ENCODE measurements at regions of chr13 and their contacts with region 1.

Region 1: GRCh38 chr13:26062844-26063444 is 11.1 kb upstream of the SHISA2 start:
- DNase-seq: peak; percentile 39 to 72 (median 61)
- H3K4me3 ChIP-seq: no peak overlapping the region
- H3K27ac ChIP-seq: no peak overlapping the region
- H3K4me1 ChIP-seq: no peaks in the 10 kb centered on the region
- H3K27me3 ChIP-seq: peaks cover 0 to 14% (median 3%) of the 10 kb centered on the region in 5 experiments

Region 2: DNA sequence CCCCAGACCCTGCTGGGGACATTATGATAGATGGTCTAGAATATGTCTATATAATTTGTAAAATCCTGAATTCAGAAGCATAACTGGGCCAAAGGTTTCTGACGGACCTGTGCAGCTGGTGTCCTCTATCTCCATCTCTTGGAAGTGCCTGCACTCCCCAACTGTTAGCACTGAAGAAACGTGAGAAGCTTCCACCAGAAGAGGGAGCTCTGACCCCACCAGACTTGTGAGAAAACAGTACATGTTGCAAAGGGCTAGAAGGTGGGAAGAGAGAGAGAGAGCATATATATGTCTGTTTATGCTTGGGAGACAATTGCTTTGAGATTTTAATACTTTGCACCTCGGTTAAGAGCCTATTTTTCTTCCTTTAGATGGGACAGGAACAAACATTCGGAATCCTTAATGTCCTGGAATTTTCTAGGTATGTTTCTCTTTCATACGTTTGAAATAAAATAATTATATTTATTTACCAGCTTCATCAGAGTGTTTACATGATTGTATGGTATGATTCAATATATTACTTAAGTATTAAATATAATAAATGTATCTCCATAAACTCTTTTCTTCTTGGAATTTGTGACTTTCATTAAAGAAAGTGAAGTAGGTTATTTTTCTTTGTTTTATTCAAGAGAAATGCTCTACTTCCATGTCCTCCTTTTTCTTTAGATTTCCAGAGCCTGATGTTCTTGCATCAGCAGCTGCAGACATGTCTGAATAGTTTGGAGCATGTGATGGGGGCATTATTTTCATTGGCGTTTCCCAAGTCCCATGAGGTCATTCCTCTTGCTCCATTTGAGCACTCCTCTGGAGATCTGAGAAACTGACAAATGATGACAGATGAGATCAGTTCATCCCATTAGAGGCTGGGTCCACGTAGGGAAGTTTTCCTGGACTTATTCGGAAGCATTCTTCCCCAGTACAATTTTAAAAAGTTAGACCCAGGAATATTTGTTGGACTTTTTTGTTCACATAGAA is 488.2 kb before region 1 on chr13:
- CTCF ChIA-PET with region 1: interaction called, 43 read pairs
- POLR2A ChIA-PET with region 1: interaction called, 3 read pairs
- DNase-seq: peak; percentile 79 to 91 (median 84)
- H3K4me3 ChIP-seq: no peak overlapping the region
- H3K27ac ChIP-seq: no peak overlapping the region
- H3K4me1 ChIP-seq: no peaks in the 10 kb centered on the region
- H3K27me3 ChIP-seq: peaks cover 0 to 49% (median 18%) of the 10 kb centered on the region in 5 experiments

Region 3: DNA sequence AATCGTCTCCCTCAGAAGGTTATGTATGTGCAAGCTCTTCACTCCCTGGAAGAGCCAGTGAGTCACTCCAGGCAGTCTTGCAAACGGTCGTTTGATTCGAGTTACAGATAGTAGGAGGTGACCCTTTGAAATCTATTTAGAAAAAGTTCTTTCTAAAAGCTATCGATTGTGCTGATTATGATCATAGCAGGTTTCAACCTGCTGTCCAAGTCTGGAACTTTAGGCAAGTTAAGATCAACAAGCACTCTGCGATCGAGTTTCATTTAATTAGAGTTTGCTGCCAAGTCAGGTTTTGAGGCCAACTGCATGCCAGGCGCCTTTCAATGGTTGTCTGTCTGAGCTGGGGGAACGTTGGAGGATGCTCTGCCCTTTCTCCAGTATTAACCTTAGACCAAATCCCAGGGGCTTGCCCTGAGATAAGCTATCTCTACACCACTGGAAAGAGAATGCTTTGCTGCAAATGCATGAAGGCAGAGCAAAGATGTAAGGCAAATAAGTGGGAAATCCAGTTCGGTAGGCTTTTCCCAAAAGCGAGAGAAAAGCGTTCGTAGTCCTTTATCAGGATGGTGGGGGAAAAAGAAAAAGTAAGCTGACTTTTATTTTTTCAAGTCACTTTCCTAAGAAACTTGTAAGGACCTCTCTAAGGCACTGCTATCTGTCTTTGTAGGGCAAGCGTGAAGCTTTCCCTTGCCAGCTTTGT is 403.7 kb before region 1 on chr13:
- CTCF ChIA-PET with region 1: no interaction called
- POLR2A ChIA-PET with region 1: no interaction called
- DNase-seq: no peak
- H3K4me3 ChIP-seq: no peak overlapping the region
- H3K27ac ChIP-seq: no peak overlapping the region
- H3K4me1 ChIP-seq: no peaks in the 10 kb centered on the region
- H3K27me3 ChIP-seq: no peaks in the 10 kb centered on the region

Region 4: DNA sequence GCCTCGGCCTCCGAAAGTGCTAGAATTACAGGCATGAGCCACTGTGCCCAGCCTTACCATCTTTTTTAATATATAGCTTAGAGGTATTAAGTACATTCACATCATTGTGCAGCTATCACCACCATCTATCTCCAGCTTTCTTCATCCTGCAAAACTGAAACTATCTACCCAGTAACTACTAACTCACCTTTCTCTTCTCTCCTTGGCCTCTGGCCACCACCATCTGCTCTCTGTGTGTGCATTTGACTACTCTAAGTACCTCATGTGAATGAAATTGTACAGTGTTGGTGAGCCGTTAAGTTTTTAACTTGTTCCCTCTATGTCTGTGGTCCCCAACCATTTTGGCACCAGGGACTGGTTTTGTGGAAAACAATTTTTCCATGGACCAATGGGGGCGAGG is 247.1 kb after region 1 on chr13:
- CTCF ChIA-PET with region 1: no interaction called
- POLR2A ChIA-PET with region 1: no interaction called
- DNase-seq: no peak
- H3K4me3 ChIP-seq: no peak overlapping the region
- H3K27ac ChIP-seq: no peak overlapping the region
- H3K4me1 ChIP-seq: no peaks in the 10 kb centered on the region
- H3K27me3 ChIP-seq: no peaks in the 10 kb centered on the region

Measured in common myeloid progenitor, CD34-positive (primary cell).